Aorta (tissue), 5 donors: ENCODE measurements at regions of chr6 and their contacts with region 1.

Region 1: GRCh38 chr6:56499095-56499494 is 143.6 kb downstream of the DST start:
- DNase-seq: no peak
- ATAC-seq: no peak
- H3K4me3 ChIP-seq: no peak overlapping the region
- H3K27ac ChIP-seq: no peak overlapping the region
- H3K4me1 ChIP-seq: peaks cover 2 to 3% of the 10 kb centered on the region in 2 donors
- H3K27me3 ChIP-seq: no peaks in the 10 kb centered on the region

Region 2: DNA sequence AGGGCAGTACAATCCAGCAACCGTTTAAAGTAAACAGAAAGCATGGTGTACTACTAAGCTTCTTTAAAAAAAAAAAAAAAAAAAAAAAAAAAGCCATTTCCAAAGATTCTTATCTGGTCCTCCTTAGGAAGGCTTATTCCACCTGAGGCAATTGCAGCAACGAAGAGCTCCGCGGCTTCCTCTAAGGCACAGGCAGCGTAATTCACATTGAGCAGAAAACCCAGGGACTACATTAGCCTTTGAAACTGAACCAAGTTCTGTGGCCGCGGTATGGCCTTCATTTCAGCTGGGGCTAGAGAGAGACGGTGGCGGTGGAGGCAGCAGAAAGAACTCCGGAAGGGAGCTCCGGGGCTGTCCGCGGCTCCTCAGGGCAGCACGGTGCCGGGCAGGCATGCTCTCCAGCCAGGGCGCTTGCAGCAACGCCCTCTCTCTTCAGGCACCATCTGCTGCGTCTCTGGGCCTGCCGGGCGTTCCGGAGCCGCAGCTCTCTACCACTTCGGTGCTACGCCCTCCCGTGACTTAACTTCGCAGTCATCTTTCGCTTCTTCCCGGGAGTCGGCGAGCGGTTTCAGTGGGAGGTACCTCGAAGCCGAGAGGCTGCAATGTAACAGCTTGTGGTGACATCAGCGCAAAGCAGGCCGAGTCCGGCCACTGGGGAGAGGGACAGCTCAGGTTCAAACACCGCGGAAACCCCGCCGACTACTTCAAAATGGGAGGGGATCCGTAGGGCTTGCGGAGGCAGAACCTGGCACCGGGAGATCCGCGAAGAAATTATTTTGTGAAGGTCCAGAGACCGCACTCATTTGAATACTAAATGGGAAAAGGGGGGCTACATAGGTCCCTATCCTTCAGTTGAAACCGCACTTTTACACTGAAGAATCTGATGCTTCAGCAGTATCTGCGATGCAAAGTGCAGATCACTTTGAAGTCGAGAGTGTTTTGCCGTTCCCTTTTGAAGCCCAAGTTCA is 43.6 kb after region 1 on chr6:
- intact Hi-C with region 1: loop called (anchors 5 kb)
- DNase-seq: peak; percentile 96
- ATAC-seq: peak; percentile 96
- H3K4me3 ChIP-seq: peak overlapping the region; percentile 83 to 85
- H3K27ac ChIP-seq: peak overlapping the region; percentile 71 to 87
- H3K4me1 ChIP-seq: no peaks in the 10 kb centered on the region
- H3K27me3 ChIP-seq: no peaks in the 10 kb centered on the region

Region 3: GRCh38 chr6:56549014-56549413 is 49.9 kb after region 1 on chr6:
- intact Hi-C with region 1: loop called (anchors 5 kb)
- DNase-seq: no peak
- ATAC-seq: peak; percentile 72
- H3K4me3 ChIP-seq: no peak overlapping the region
- H3K27ac ChIP-seq: no peak overlapping the region
- H3K4me1 ChIP-seq: peaks cover 5 to 7% of the 10 kb centered on the region in 2 donors
- H3K27me3 ChIP-seq: no peaks in the 10 kb centered on the region